Mammary epithelial cell (primary cell): ENCODE measurements at regions of chr6 and their contacts with region 1.

Region 1: GRCh38 chr6:4363656-4364055 is 228.3 kb upstream of the ECI2 start:
- DNase-seq: no peak
- H3K4me3 ChIP-seq: no peak overlapping the region
- H3K27ac ChIP-seq: no peak overlapping the region
- H3K4me1 ChIP-seq: peaks cover 12% of the 10 kb centered on the region
- H3K27me3 ChIP-seq: no peaks in the 10 kb centered on the region
- CTCF ChIP-seq: no peak

Region 2: DNA sequence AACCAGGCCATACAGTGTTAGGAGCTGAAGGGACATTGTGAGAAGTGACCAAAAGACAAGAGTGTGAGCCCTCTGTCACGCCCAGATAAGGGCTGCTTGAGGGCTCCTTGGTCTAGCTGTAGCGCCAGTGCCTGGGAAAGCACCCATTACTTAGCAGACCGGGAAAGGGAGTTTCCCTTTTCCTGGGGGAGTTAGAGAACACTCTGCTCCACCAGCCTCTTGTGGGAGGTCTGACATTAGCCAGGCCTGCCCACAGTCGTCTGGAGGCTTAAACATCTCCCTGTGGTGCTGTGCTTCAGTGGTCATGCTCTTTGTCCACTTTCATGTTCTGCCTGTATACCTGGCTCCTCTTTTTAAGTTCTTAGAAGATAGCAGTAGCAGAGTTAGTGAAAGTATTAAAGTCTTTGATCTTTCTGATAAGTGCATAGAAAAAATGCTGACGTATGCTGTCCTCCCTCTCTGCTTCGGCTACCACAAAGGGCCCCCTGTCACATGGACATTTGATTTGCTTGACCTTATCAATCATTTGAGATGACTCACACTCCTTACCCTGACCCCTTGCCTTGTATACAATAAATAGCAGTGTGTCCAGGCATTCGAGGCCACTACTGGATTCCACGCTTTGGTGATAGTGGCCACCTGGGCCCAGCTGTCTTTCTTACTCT is 26.7 kb before region 1 on chr6:
- CTCF ChIA-PET with region 1: no interaction called
- dilution Hi-C with region 1: no loop called
- in situ Hi-C with region 1: no loop called
- intact Hi-C with region 1: no loop called
- DNase-seq: peak; percentile 20
- H3K4me3 ChIP-seq: no peak overlapping the region
- H3K27ac ChIP-seq: no peak overlapping the region
- H3K4me1 ChIP-seq: no peaks in the 10 kb centered on the region
- H3K27me3 ChIP-seq: no peaks in the 10 kb centered on the region
- CTCF ChIP-seq: no peak

Region 3: DNA sequence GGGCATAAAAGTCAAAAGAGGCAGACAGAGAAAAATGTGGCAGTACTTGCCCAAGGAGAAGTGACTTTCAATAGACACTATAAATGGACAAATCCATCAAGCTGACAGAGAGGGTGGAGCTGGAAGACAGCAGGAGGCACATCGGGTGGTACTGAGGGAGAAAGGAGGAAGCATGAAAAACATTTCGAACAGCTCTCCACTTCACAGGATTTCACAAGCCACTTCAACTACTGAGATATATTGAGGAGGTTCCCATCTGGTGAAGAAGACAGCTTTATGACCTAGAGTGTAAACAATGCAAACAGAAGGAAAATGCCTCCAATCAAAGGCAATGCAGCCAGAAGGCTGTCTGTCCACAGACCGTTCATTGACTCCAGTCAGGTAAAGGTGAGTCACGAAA is 31.1 kb after region 1 on chr6:
- CTCF ChIA-PET with region 1: no interaction called
- dilution Hi-C with region 1: loop called (anchors 5 kb)
- in situ Hi-C with region 1: no loop called
- intact Hi-C with region 1: no loop called
- DNase-seq: no peak
- H3K4me3 ChIP-seq: no peak overlapping the region
- H3K27ac ChIP-seq: no peak overlapping the region
- H3K4me1 ChIP-seq: no peaks in the 10 kb centered on the region
- H3K27me3 ChIP-seq: no peaks in the 10 kb centered on the region
- CTCF ChIP-seq: no peak

Region 4: GRCh38 chr6:4420160-4420865 is 56.7 kb after region 1 on chr6:
- CTCF ChIA-PET with region 1: no interaction called
- dilution Hi-C with region 1: no loop called
- in situ Hi-C with region 1: no loop called
- intact Hi-C with region 1: no loop called
- DNase-seq: no peak
- H3K4me3 ChIP-seq: no peak overlapping the region
- H3K27ac ChIP-seq: no peak overlapping the region
- H3K4me1 ChIP-seq: no peaks in the 10 kb centered on the region
- H3K27me3 ChIP-seq: no peaks in the 10 kb centered on the region
- CTCF ChIP-seq: no peak

Region 5: DNA sequence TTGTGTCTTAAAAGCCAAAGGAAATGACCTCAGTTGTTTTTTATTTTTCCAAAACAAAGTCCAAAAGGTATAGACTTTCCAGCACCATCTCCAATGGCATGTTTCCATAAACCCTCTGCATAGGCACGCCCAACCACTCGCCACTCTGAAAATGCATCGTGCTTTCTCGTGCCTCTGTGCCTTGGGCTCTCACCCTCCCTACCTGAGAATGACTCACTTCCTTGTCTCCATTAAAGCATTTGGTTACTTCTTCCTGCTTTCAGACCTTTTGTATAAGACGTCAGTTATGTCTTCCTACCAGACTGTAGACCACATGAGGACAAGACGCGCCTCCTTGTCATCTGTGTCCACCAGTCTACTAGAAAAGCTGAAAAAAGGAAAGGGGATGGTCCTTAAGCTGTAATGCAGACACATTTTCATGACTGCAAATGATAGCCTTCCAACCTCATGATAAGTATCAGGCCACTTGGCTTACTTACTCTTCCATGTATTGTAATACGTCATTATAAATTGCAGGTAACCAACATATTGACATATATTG is 351.4 kb after region 1 on chr6:
- CTCF ChIA-PET with region 1: no interaction called
- dilution Hi-C with region 1: no loop called
- in situ Hi-C with region 1: no loop called
- intact Hi-C with region 1: no loop called
- DNase-seq: peak; percentile 42
- H3K4me3 ChIP-seq: no peak overlapping the region
- H3K27ac ChIP-seq: no peak overlapping the region
- H3K4me1 ChIP-seq: no peaks in the 10 kb centered on the region
- H3K27me3 ChIP-seq: no peaks in the 10 kb centered on the region
- CTCF ChIP-seq: no peak